Activated CD4-positive, alpha-beta memory T cell treated with anti-CD3 and anti-CD28 coated beads for 36 hours (primary cell): ENCODE measurements at regions of chr3 and their contacts with region 1.

Region 1: DNA sequence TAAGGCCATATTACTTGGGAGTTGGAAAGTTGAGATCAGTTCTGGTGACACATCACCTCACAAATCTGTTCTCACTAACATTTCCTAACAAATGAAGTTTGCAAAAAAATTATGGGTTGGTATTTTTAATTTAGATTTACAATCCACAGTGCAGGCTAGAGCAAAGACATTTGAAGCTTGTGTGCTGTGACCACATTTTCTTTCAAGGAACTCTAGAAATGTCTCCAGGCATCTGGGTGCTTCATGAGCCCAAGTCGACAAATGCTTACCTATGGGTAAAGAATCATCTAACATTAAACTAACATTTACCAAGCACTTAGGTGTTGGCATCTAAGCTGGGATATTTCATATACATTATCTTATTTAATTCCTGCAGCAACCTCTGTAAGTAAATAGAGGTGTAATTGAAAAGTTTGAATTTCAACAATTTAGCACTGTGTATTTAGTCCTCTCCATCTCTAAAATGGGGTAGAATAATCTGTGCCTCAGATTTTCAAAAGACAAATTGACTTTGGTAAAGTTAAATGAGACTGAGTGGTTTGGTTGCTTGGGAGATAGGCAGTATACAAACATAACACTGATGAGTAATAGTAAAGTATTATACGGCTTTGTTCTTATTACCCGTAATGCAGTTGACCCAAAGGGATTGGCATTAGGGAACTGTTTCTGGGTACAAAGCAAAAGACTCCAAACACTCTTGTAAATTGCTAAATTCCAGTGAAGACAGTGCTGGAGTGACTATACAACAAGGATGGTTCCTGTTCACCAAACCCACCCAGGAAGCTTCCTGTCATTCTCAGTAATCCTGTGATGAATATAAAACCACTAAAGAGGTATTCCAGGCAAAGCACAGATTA is 162.5 kb downstream of the TPRG1 start:
- DNase-seq: no peak
- H3K4me3 Mint-ChIP-seq: no peak overlapping the region
- H3K27ac Mint-ChIP-seq: no peak overlapping the region
- H3K4me1 Mint-ChIP-seq: peaks cover 40% of the 10 kb centered on the region
- H3K27me3 Mint-ChIP-seq: no peaks in the 10 kb centered on the region

Region 2: GRCh38 chr3:189288348-189289235 is 45.7 kb before region 1 on chr3:
- CTCF ChIA-PET with region 1: no interaction called
- POLR2A ChIA-PET with region 1: interaction called, 3 read pairs
- intact Hi-C with region 1: loop called (anchors 1 kb)
- DNase-seq: no peak
- H3K4me3 Mint-ChIP-seq: no peak overlapping the region
- H3K27ac Mint-ChIP-seq: peak overlapping the region; percentile 33
- H3K4me1 Mint-ChIP-seq: peaks cover 33% of the 10 kb centered on the region
- H3K27me3 Mint-ChIP-seq: no peaks in the 10 kb centered on the region

Region 3: DNA sequence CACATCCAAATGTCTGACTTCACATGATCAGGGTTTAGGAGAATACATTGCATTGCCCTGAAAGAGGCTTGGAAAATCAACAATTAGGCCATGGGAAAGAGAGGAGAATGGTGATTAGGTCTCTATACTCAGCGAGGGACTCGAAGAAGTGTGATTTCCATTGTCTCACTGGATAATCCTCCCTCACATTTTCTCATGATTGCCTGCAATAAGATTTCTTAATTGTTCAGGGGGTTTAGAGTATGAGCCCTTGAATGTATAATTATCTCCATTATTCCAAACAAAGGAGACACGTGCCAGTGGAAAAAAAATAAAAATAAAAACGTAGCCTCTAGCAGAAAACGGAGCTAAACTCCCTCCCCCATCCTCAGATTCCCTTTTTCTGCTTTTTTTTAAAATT is 10.7 kb after region 1 on chr3:
- CTCF ChIA-PET with region 1: no interaction called
- POLR2A ChIA-PET with region 1: no interaction called
- intact Hi-C with region 1: no loop called
- DNase-seq: no peak
- H3K4me3 Mint-ChIP-seq: no peak overlapping the region
- H3K27ac Mint-ChIP-seq: no peak overlapping the region
- H3K4me1 Mint-ChIP-seq: no peaks in the 10 kb centered on the region
- H3K27me3 Mint-ChIP-seq: no peaks in the 10 kb centered on the region

Region 4: DNA sequence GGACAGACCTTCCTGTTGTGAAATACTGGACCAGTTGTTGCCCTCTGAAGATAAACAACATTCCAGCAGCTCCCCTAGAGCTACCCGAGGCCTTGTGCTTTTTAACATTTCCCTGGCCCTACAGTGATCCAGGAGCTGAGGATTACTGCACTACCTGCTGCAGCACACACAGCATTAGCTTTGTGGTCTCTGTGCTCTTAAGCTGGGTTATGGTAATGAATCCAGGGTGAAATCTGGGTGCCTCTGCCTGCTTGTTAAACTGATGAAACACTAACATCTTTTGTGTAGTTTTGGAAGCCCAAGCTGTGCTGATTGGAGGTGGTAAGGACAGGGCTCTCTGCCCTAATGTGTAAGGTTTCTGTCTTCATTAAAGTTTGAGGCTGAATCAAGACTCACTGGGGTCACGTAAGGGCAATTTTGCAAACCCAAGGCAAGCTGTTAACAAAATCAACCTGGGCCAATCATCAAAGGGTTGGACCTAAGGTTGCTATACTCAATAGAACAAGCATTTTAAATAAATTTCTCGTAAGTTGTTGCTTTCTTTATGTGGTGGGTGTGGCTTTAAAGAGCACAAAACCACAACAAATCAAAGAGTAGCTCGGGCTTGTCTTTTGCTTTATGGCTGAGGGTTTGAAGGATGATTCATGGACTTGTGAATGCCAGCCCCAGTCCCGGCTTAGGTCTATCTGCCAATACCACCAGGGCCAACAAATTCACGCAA is 21.3 kb after region 1 on chr3:
- CTCF ChIA-PET with region 1: interaction called, 4 read pairs
- POLR2A ChIA-PET with region 1: interaction called, 3 read pairs
- intact Hi-C with region 1: loop called (anchors 1 kb)
- DNase-seq: peak; percentile 46
- H3K4me3 Mint-ChIP-seq: peak overlapping the region; percentile 48
- H3K27ac Mint-ChIP-seq: peak overlapping the region; percentile 62
- H3K4me1 Mint-ChIP-seq: peaks cover 19% of the 10 kb centered on the region
- H3K27me3 Mint-ChIP-seq: no peaks in the 10 kb centered on the region